ENCODE measurements at regions of chr2 and their contacts with region 1.

Region 1: GRCh38 chr2:196076778-196077568 is 8.3 kb upstream of the DNAH7 start:
- DNase-seq: no peak
- ATAC-seq: no peak
- H3K4me3 ChIP-seq: no peak overlapping the region
- H3K27ac ChIP-seq: no peak overlapping the region
- H3K4me1 ChIP-seq: peaks cover 6 to 14% of the 10 kb centered on the region in 2 donors
- H3K27me3 ChIP-seq: no peaks in the 10 kb centered on the region
- CTCF ChIP-seq: no peak

Region 2: DNA sequence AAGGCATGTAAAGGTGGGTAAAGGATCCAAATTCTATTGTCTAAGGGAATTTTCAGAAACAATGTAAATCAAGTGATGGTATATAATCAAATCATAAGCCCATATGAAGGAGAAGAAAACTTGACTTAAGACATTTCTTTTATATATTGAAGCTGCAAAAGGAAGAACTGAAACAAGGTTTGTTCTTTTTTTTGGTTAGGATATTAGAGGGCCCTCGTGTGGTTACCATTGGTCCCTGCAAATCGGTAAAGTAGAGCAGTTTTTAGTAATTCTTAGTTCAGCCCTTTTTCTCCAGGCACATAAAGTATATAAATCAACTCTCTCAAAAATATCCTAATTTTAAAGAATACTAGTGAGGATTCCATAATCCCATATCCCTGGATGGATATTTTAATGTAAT is 200.0 kb after region 1 on chr2:
- intact Hi-C with region 1: loop called in 1 of 2 experiments (anchors 10 kb)
- DNase-seq: no peak
- ATAC-seq: peak; percentile 61
- H3K4me3 ChIP-seq: no peak overlapping the region
- H3K27ac ChIP-seq: no peak overlapping the region
- H3K4me1 ChIP-seq: peaks cover 13 to 36% of the 10 kb centered on the region in 2 donors
- H3K27me3 ChIP-seq: no peaks in the 10 kb centered on the region
- CTCF ChIP-seq: peak; percentile 40 to 63